Aorta (tissue), 5 donors: ENCODE measurements at regions of chr10 and their contacts with region 1.

Region 1: DNA sequence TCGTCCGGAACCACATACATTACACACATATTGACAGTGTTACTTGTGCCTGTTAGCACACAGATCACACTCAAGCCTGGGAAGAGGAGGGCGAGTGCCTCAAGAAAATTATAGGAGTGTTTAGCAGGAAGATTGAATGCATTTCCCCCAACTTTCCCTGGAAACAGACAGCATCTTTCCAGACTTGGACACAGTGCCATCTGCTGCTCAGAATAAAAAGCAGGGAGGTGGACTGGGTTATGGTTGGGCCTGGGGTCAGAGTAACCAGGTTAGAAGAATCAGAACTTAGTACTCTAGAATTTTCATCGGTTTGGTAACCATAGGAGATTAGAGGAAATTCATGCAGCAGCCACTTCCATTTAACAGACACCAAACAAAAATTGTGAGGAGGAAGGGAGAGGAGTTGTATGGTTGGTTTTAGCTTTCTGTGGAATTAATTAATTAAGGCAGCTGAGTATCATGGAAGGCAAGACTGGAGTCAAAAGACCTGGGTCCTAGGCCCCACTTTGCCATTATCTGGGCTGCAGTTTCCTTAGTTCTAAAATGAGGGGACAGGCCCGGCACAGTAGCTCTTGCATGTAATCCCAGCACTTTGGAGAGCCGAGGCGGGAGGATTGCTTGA is 43.4 kb upstream of the OPTN start:
- DNase-seq: no peak
- ATAC-seq: no peak
- H3K4me3 ChIP-seq: no peak overlapping the region
- H3K27ac ChIP-seq: no peak overlapping the region
- H3K4me1 ChIP-seq: no peaks in the 10 kb centered on the region
- H3K27me3 ChIP-seq: no peaks in the 10 kb centered on the region

Region 2: DNA sequence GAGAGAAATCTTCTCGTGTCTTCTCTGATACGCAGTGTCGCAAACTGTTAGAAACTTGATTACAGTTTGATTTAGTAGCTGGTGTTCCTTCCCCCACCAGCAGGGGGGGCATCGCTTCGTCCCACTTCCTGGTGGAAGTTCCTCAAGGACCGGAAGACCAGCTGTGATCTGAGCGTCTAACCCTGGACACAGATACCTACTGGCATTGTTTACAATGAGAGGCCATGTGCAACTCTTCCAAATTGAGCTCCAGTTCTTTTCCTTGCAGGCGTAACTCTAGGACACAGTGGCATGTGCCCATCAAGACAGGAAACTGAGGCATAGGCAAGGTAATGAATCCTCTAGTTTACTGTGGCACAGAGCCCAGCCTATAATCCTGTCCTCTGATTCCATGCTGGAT is 274.0 kb before region 1 on chr10:
- intact Hi-C with region 1: loop called in 1 of 2 experiments (anchors 5 kb)
- DNase-seq: no peak
- ATAC-seq: no peak
- H3K4me3 ChIP-seq: no peak overlapping the region
- H3K27ac ChIP-seq: no peak overlapping the region
- H3K4me1 ChIP-seq: no peaks in the 10 kb centered on the region
- H3K27me3 ChIP-seq: no peaks in the 10 kb centered on the region

Region 3: DNA sequence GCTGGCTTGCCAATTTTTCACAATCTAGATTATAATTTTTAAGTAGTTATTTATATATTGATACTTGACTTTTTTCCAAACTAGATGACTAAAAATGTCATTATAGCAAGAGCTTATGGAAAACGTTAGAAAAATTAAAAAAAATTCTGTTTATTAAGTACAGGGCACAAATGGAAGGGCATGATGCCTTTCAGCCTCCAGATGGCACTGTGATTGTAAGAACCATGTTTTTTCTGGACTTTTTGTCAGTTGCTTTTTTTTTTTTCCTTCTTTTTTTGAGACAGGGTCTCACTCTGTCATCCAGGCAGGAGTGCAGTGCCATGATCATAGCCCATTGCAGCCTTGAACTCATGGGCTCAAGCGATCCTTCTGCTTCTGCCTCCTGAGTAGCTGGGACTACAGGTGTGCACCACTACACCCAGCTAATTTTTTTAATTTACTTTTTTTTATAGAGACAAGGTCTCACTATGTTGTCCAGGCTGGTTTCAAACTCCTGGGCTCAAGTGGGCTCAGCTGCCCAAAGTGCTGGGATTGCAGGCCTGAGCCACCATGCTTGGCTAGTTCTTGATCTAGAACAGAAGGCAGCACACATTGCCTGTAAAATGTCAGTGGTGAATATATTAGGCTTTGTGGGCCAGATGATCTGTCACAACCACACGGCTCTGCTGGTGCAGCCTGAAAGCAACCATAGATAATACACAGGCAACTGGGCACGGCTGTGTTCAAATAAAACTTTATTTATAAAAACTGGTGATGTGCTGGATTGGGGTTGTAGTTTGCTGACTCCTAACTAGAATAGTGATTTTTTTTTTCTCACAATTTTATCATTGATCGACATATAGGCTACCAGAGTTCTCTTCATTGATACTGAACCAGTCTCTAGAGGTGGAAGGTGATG is 150.2 kb after region 1 on chr10:
- intact Hi-C with region 1: no loop called
- DNase-seq: no peak
- ATAC-seq: no peak
- H3K4me3 ChIP-seq: no peak overlapping the region
- H3K27ac ChIP-seq: no peak overlapping the region
- H3K4me1 ChIP-seq: no peaks in the 10 kb centered on the region
- H3K27me3 ChIP-seq: no peaks in the 10 kb centered on the region